Mammary epithelial cell (primary cell): ENCODE measurements at regions of chr12 and their contacts with region 1.

Region 1: GRCh38 chr12:109518820-109519665 is 41.6 kb downstream of the UBE3B start:
- DNase-seq: peak; percentile 31
- H3K4me3 ChIP-seq: no peak overlapping the region
- H3K27ac ChIP-seq: no peak overlapping the region
- H3K4me1 ChIP-seq: no peaks in the 10 kb centered on the region
- H3K27me3 ChIP-seq: no peaks in the 10 kb centered on the region
- CTCF ChIP-seq: peak; percentile 87 to 89

Region 2: GRCh38 chr12:109428037-109428629 is 90.9 kb before region 1 on chr12:
- CTCF ChIA-PET with region 1: interaction called, 9 read pairs
- dilution Hi-C with region 1: no loop called
- in situ Hi-C with region 1: no loop called
- intact Hi-C with region 1: loop called (anchors 2 kb)
- DNase-seq: peak; percentile 57
- H3K4me3 ChIP-seq: no peak overlapping the region
- H3K27ac ChIP-seq: no peak overlapping the region
- H3K4me1 ChIP-seq: peaks cover 6% of the 10 kb centered on the region
- H3K27me3 ChIP-seq: no peaks in the 10 kb centered on the region
- CTCF ChIP-seq: peak; percentile 99

Region 3: GRCh38 chr12:109544955-109545531 is 26.0 kb after region 1 on chr12:
- CTCF ChIA-PET with region 1: no interaction called
- dilution Hi-C with region 1: no loop called
- in situ Hi-C with region 1: no loop called
- intact Hi-C with region 1: no loop called
- DNase-seq: peak; percentile 11
- H3K4me3 ChIP-seq: no peak overlapping the region
- H3K27ac ChIP-seq: no peak overlapping the region
- H3K4me1 ChIP-seq: peaks cover 25% of the 10 kb centered on the region
- H3K27me3 ChIP-seq: no peaks in the 10 kb centered on the region
- CTCF ChIP-seq: no peak

Region 4: DNA sequence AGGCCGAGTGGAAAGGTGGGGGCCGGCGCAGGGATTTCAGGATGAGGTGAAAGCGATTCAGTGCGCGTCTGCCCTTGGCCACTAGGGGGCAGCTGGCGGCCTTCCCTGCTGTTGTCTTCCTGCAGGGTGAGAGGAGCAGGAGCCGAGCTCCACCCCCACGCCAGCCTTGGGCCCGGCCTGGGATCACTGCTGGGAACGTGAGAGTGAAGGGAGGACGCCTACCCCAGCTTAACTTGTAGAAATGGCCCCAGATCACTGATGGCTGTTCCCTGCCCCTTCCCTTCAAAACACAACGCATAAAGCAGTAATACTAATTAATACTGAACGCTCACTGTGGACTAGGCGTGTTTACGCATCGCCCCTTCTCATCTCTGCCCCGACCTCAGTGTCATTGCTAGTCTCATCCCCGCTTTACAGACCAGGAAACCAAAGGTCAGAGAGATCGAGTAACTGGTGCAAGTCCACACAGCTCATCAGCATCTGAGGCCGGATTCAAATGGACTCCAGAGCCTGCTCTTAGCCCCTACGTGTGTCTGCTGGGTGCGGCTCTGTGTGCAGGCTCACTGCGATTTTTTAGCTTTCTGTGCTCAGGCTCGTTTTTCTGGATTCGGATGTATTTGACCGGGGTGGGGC is 78.9 kb after region 1 on chr12:
- CTCF ChIA-PET with region 1: no interaction called
- dilution Hi-C with region 1: no loop called
- in situ Hi-C with region 1: no loop called
- intact Hi-C with region 1: loop called (anchors 1 kb)
- DNase-seq: peak; percentile 62
- H3K4me3 ChIP-seq: no peak overlapping the region
- H3K27ac ChIP-seq: no peak overlapping the region
- H3K4me1 ChIP-seq: peaks cover 5% of the 10 kb centered on the region
- H3K27me3 ChIP-seq: no peaks in the 10 kb centered on the region
- CTCF ChIP-seq: peak; percentile 91 to 97

Region 5: GRCh38 chr12:109713187-109713984 is 194.3 kb after region 1 on chr12 and contains the start of gene FAM222A:
- CTCF ChIA-PET with region 1: no interaction called
- dilution Hi-C with region 1: no loop called
- in situ Hi-C with region 1: no loop called
- intact Hi-C with region 1: loop called (anchors 5 kb)
- DNase-seq: peak; percentile 95
- H3K4me3 ChIP-seq: peak within 1 kb of the TSS; percentile 21 to 59 (median 45)
- H3K27ac ChIP-seq: no peak within 1 kb of the TSS
- H3K4me1 ChIP-seq: peaks cover 5% of the 10 kb centered on the region
- H3K27me3 ChIP-seq: peaks cover 4% of the 10 kb centered on the region
- CTCF ChIP-seq: no peak
- total RNA-seq, gene FAM222A: 0.50 to 1.3 TPM

Region 6: GRCh38 chr12:109818905-109819500 is 300.0 kb after region 1 on chr12:
- CTCF ChIA-PET with region 1: no interaction called
- dilution Hi-C with region 1: no loop called
- in situ Hi-C with region 1: no loop called
- intact Hi-C with region 1: no loop called
- DNase-seq: peak; percentile 95
- H3K4me3 ChIP-seq: no peak overlapping the region
- H3K27ac ChIP-seq: peak overlapping the region; percentile 36
- H3K4me1 ChIP-seq: peaks cover 52% of the 10 kb centered on the region
- H3K27me3 ChIP-seq: no peaks in the 10 kb centered on the region
- CTCF ChIP-seq: no peak

Region 7: GRCh38 chr12:109844983-109845823 is 326.2 kb after region 1 on chr12:
- CTCF ChIA-PET with region 1: no interaction called
- dilution Hi-C with region 1: no loop called
- in situ Hi-C with region 1: no loop called
- intact Hi-C with region 1: loop called (anchors 10 kb)
- DNase-seq: peak; percentile 83
- H3K4me3 ChIP-seq: peak overlapping the region in 1 of 3 experiments; percentile 28
- H3K27ac ChIP-seq: no peak overlapping the region
- H3K4me1 ChIP-seq: peaks cover 14% of the 10 kb centered on the region
- H3K27me3 ChIP-seq: no peaks in the 10 kb centered on the region
- CTCF ChIP-seq: peak; percentile 82 to 99